Mammary epithelial cell (primary cell): ENCODE measurements at regions of chr11 and their contacts with region 1.

Region 1: GRCh38 chr11:118046051-118046963 is 30.6 kb upstream of the TMPRSS4 start:
- DNase-seq: peak; percentile 17
- H3K4me3 ChIP-seq: no peak overlapping the region
- H3K27ac ChIP-seq: no peak overlapping the region
- H3K4me1 ChIP-seq: peaks cover 17% of the 10 kb centered on the region
- H3K27me3 ChIP-seq: no peaks in the 10 kb centered on the region
- CTCF ChIP-seq: no peak

Region 2: DNA sequence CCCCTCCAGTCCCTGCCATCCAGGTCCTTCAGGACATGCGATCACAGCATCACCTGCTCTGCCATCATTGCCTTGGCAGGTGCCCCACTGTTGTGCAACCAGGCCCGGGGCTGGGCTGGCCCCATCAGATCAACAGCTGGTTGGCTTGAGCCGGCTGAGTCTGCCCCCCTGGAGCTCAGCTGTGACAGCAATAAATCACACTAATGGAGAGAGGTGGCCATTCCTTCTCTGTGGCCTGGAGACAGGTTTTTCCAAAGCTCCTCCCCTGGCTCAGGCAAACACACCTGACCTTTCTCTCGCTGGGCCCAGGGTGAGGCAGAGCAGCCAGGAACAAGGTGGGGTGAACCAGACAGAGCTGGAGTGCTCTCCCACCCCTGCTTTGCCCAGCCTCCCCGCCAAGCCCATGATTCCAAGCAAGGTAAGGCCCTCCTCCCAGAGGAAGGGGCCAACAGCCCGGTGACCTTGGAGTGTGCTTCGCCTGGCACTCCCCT is 212.9 kb before region 1 on chr11:
- CTCF ChIA-PET with region 1: no interaction called
- dilution Hi-C with region 1: no loop called
- in situ Hi-C with region 1: loop called in 1 of 2 experiments (anchors 10 kb)
- intact Hi-C with region 1: no loop called
- DNase-seq: no peak
- H3K4me3 ChIP-seq: no peak overlapping the region
- H3K27ac ChIP-seq: no peak overlapping the region
- H3K4me1 ChIP-seq: peaks cover 10% of the 10 kb centered on the region
- H3K27me3 ChIP-seq: no peaks in the 10 kb centered on the region
- CTCF ChIP-seq: no peak

Region 3: GRCh38 chr11:118076754-118077281 is 30.5 kb after region 1 on chr11 and contains the start of gene TMPRSS4:
- CTCF ChIA-PET with region 1: no interaction called
- dilution Hi-C with region 1: no loop called
- in situ Hi-C with region 1: no loop called
- intact Hi-C with region 1: no loop called
- DNase-seq: peak; percentile 87
- H3K4me3 ChIP-seq: no peak within 1 kb of the TSS
- H3K27ac ChIP-seq: peak within 1 kb of the TSS; percentile 7
- H3K4me1 ChIP-seq: peaks cover 58% of the 10 kb centered on the region
- H3K27me3 ChIP-seq: no peaks in the 10 kb centered on the region
- CTCF ChIP-seq: no peak
- total RNA-seq, gene TMPRSS4: 0.67 to 2.9 TPM